ENCODE measurements at regions of chr19 and their contacts with region 1.

Region 1: DNA sequence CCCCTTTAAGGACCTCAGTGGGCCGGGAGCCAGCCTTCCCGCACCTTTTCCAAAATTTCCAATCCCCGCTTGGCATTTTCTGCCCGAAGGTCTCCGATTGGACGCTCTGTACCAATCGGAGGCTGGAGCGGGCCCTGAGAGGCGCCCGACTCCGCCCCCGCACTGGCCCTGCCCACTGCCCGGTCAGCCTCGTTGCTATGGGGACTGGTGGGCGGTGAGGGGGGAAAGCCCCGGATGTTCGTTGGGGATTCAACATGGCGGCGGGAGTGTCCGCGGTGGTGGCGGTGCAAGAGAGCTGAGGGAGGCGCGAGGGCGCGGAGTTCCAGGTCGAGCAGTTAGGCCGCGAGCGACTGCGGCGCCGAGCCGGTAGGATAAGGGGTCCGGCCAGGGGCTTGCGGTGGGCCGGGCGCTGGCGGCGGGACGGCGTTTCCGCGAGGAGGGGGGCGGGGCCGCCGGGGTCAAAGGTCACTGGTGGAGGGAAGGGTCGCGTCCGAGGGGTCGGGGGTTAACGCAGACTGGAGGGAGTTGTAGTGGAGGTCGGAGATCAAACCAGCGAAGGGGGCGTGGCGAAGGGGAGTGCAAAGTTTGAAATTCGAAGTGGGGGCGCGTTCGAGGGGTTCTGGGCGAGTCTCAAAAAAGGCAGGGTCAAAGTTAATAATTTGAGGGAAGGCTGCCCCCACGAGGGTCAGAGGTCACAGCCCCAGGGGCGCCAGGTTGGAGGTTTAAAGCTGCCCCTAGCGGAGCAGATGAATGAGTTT is at the start of gene PAK4:
- DNase-seq: peak; percentile 94
- ATAC-seq: peak; percentile 85
- H3K4me3 ChIP-seq: peak within 1 kb of the TSS; percentile 80 to 87 (median 85)
- H3K27ac ChIP-seq: peak within 1 kb of the TSS; percentile 99
- H3K4me1 ChIP-seq: peaks cover 59% of the 10 kb centered on the region
- H3K27me3 ChIP-seq: no peaks in the 10 kb centered on the region
- CTCF ChIP-seq: no peak; the same call in 1 of the 2 replicates
- EP300 ChIP-seq: no peak
- POLR2A ChIP-seq: peak; percentile 53 to 81; a peak in 2 of 4 replicates
- RAD21 ChIP-seq: no peak
- total RNA-seq, gene PAK4: 9.5 and 11.6 TPM in 2 replicates

Region 2: DNA sequence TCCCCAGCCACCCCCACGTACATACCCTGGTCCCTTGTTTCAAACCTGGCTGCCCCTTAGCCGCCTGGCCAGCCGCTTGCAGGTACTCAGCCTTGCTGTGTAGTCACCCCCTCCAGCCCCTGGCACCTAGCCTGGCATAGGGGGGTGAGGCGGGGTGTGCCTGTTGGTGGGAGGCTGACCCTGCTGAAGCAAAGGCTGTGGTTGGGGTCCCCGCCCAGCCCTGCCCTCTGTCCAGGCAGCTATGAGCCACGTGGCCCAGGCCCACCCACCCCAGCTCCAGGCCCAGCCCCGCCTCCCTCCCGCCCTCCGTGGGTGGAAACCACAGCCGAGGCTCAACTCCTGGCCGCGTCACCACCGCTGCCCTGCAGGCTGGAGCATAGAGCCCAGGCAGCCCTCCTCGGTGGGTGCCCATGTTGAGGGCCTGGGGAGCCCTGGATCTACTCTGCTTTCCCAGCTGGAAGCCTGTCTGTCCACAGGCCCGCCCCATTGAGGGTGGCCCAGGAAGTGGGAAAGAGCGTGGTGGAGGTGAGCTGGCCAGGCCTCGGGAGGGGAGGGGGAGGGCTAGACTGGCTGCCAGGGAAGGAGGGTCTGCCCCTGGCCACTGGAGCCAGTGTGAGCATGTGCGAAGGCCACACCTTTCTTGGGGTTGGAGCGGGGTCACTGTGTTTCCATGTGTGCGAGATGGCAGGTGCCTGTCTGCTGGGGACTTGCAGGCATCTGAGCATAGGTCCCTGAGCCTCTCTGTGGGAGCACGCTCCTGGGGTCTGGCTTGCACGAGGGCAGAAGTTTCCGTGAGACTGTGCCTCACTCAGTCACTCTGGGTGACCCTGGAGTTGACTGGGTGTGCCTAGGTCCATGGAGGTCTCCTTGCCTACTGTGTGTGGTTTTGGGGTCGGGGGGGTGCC is 30.8 kb after region 1 on chr19:
- CTCF ChIA-PET with region 1: no interaction called
- POLR2A ChIA-PET with region 1: no interaction called
- in situ Hi-C with region 1: no loop called
- intact Hi-C with region 1: loop called (anchors 5 kb)
- DNase-seq: no peak
- ATAC-seq: peak; percentile 17
- H3K4me3 ChIP-seq: peak overlapping the region in 1 of 3 experiments; percentile 45; a peak in 2 of 6 replicates
- H3K27ac ChIP-seq: peak overlapping the region; percentile 66
- H3K4me1 ChIP-seq: peaks cover 52% of the 10 kb centered on the region
- H3K27me3 ChIP-seq: no peaks in the 10 kb centered on the region
- CTCF ChIP-seq: no peak
- EP300 ChIP-seq: no peak
- POLR2A ChIP-seq: no peak
- RAD21 ChIP-seq: no peak

Region 3: GRCh38 chr19:39174142-39174903 is 48.6 kb after region 1 on chr19:
- CTCF ChIA-PET with region 1: no interaction called
- POLR2A ChIA-PET with region 1: no interaction called
- in situ Hi-C with region 1: no loop called
- intact Hi-C with region 1: no loop called
- DNase-seq: no peak
- ATAC-seq: no peak
- H3K4me3 ChIP-seq: no peak overlapping the region
- H3K27ac ChIP-seq: no peak overlapping the region
- H3K4me1 ChIP-seq: peaks cover 17% of the 10 kb centered on the region
- H3K27me3 ChIP-seq: no peaks in the 10 kb centered on the region; a peak in 1 of 5 replicates
- CTCF ChIP-seq: no peak
- EP300 ChIP-seq: no peak
- POLR2A ChIP-seq: no peak
- RAD21 ChIP-seq: no peak

Region 4: DNA sequence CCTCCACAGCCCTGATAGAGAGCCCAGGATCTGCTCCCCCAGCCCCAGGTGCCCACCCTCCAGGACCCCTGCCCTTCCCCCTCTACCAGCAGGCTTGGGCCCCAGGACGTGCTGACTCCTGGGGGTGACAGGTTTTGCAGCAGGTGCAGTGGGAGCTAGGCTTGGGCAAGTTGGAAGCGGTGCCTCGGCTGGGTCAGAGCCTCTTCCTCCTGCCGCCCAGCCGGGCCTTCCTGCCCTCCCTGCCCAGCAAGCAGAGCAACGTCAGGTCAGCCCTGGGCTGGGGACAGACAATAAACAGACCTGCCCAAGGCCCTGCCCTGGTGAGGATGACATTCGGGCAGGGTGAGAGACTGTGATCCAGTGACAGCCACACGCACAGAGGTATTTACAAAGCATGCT is 61.8 kb after region 1 on chr19:
- CTCF ChIA-PET with region 1: interaction called, 25 read pairs
- POLR2A ChIA-PET with region 1: no interaction called
- in situ Hi-C with region 1: loop called (anchors 5 kb)
- intact Hi-C with region 1: loop called (anchors 1 kb)
- DNase-seq: no peak
- ATAC-seq: peak; percentile 46
- H3K4me3 ChIP-seq: no peak overlapping the region
- H3K27ac ChIP-seq: no peak overlapping the region
- H3K4me1 ChIP-seq: peaks cover 10% of the 10 kb centered on the region; the same call in 1 of the 2 replicates
- H3K27me3 ChIP-seq: peaks cover 0 to 7% of the 10 kb centered on the region in 2 experiments; a peak in 1 of 5 replicates
- CTCF ChIP-seq: no peak
- EP300 ChIP-seq: no peak
- POLR2A ChIP-seq: no peak
- RAD21 ChIP-seq: no peak

Region 5: DNA sequence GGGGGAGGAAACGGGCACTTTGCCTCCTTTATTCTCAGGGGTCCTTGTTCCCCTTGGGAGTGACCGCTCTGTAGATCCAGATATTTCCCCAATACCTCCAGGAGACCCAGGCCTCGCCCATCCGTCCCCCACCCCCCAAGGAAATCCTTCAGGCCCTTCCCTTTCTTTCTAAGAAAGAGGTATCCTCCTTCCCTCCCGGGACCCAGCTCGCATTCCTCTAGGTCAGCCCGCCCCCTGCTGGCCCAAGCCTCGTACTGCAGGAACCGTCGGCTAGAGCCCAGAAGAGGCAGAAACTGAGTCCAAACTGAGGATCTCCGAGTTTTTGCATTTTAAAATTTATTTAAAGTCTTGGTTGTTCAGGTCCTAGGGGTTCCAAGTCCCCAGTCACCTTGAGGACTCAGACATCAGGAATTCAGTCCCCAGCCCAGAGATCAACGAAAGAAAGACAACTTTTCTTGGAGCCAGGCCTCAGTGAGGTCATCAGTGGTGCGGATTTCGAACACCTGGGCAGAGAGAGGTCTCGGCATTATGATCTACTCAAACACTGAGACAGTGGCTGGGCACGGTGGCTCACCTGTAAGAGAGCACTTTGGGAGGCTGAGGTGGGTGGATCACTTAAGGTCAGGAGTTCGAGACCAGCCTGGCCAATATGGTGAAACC is 202.4 kb after region 1 on chr19:
- CTCF ChIA-PET with region 1: interaction called, 14 read pairs
- POLR2A ChIA-PET with region 1: interaction called, 3 read pairs
- in situ Hi-C with region 1: loop called (anchors 5 kb)
- intact Hi-C with region 1: no loop called
- DNase-seq: peak; percentile 22
- ATAC-seq: peak; percentile 49; the same call in 1 of the 3 replicates
- H3K4me3 ChIP-seq: no peak overlapping the region
- H3K27ac ChIP-seq: no peak overlapping the region
- H3K4me1 ChIP-seq: peaks cover 36% of the 10 kb centered on the region
- H3K27me3 ChIP-seq: no peaks in the 10 kb centered on the region
- CTCF ChIP-seq: peak; percentile 91
- EP300 ChIP-seq: no peak
- POLR2A ChIP-seq: no peak
- RAD21 ChIP-seq: peak; percentile 77; the same call in 1 of the 2 replicates

Measured in HepG2 (cell line).